ENCODE measurements at regions of chr1 and their contacts with region 1.

Region 1: GRCh38 chr1:116168277-116169097 is 57.3 kb downstream of the MAB21L3 start:
- DNase-seq: no peak
- H3K4me3 ChIP-seq: peak overlapping the region; percentile 50
- H3K27me3 ChIP-seq: peaks cover 16% of the 10 kb centered on the region
- CTCF ChIP-seq: peak; percentile 70

Region 2: DNA sequence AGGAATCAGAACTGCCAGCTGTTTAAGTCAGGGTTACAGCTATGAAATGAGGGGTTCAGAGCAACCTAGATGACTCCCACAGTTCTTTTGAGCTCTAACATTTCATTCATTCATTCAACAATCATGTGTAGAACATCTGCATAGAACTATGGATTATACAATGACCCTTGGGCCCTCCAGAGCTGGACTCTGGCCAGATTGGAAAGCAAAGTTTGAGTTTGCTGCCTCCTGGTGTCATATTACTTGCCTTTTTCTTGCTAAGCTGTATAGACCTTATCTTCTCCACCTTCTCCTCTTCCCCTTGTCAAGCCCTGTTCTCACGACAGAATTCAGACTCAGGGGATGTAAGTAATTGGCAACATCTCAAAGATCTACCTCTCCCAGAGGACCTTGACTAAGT is 403.9 kb before region 1 on chr1:
- CTCF ChIA-PET with region 1: no interaction called
- POLR2A ChIA-PET with region 1: no interaction called
- DNase-seq: no peak
- H3K4me3 ChIP-seq: no peak overlapping the region
- H3K27me3 ChIP-seq: peaks cover 3% of the 10 kb centered on the region
- CTCF ChIP-seq: peak; percentile 32; the same call in 1 of the 2 replicates

Region 3: GRCh38 chr1:116078699-116079213 is 89.7 kb before region 1 on chr1:
- CTCF ChIA-PET with region 1: no interaction called
- POLR2A ChIA-PET with region 1: no interaction called
- DNase-seq: no peak
- H3K4me3 ChIP-seq: no peak overlapping the region
- H3K27me3 ChIP-seq: no peaks in the 10 kb centered on the region
- CTCF ChIP-seq: no peak

Region 4: GRCh38 chr1:116131866-116132605 is 36.5 kb before region 1 on chr1:
- CTCF ChIA-PET with region 1: no interaction called
- POLR2A ChIA-PET with region 1: no interaction called
- DNase-seq: no peak
- H3K4me3 ChIP-seq: no peak overlapping the region
- H3K27me3 ChIP-seq: peaks cover 13% of the 10 kb centered on the region
- CTCF ChIP-seq: no peak

Region 5: DNA sequence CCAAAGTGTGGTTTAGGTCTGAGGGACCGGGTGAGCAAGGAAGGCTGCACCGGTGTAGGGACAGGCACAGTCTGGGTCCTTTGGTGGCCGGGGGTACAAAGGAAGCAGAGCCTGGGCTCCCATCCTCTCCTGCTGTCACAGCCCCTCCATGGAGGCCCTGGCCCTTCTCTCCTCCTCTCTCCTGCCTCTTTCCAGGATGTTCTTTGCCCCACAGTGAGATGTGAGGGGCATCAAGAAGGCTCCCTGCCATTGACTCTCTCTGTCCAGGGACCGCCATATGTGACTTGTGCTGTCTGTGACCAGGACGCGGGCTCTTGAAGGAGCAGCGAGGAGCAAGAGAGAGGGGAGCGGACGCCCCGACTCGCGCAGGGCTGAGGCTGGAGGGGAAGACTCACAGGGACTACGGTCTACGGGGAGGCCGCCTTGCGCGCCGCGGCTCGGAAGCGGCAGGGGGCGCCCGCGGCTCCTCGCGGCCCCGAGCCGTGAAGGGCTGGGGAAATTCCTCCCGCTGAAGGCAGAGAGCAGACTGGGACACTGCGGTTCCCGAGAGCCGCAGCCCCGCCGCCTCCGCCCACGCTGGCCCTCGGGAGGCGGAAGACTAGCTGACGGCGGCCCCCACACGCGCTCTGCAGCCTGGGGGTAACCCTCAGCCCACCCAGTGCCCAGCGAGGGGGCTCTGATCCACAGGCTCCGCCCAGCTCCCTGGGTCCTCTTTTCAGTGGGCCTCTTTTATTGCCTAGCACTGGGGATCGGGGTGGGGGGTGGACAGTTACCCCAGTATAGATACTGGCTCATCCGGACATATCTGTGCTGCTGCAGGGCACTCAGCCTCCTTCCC is 16.5 kb before region 1 on chr1:
- CTCF ChIA-PET with region 1: interaction called, 29 read pairs
- POLR2A ChIA-PET with region 1: no interaction called
- DNase-seq: peak; percentile 9
- H3K4me3 ChIP-seq: peak overlapping the region; percentile 44
- H3K27me3 ChIP-seq: peaks cover 16% of the 10 kb centered on the region
- CTCF ChIP-seq: peak; percentile 69